Spleen (tissue), 13 donors: ENCODE measurements at regions of chr1 and their contacts with region 1.

Region 1: GRCh38 chr1:220776720-220777326 is 9.9 kb upstream of the MTARC1 start:
- DNase-seq: peak; percentile 95
- H3K4me3 ChIP-seq: no peak overlapping the region
- H3K27ac ChIP-seq: peak overlapping the region in 3 of 8 donors; percentile 73 to 83 (median 74)
- H3K4me1 ChIP-seq: peaks cover 0 to 28% (median 15%) of the 10 kb centered on the region in 6 donors
- H3K27me3 ChIP-seq: no peaks in the 10 kb centered on the region
- CTCF ChIP-seq: peak; percentile 55 to 94 (median 86)
- POLR2A ChIP-seq: no peak

Region 2: DNA sequence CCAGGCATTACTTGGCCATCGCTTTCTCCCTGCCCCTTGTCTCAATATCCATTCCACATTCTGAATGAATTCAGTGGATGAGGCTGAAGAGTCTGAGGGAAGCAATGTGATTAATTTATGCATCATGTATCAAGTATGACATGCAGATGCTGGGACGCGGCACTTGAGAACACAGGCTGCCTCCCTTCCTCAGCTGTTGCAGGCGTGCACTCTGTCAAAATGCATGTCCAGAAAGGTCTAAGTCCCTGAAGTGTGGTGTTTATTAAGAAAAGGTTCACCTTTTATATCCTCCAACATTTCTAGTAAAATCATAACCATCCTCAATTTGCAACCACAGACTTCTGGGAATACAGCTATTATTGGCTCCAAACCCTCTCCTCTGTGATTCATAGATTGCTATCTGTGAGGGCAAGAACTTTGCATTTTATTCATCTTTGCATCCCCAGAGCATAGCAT is 481.9 kb before region 1 on chr1:
- intact Hi-C with region 1: loop called (anchors 10 kb)
- DNase-seq: no peak
- H3K4me3 ChIP-seq: no peak overlapping the region
- H3K27ac ChIP-seq: no peak overlapping the region
- H3K4me1 ChIP-seq: no peaks in the 10 kb centered on the region
- H3K27me3 ChIP-seq: peaks cover 0 to 44% (median 0%) of the 10 kb centered on the region in 7 donors
- CTCF ChIP-seq: no peak
- POLR2A ChIP-seq: no peak

Region 3: GRCh38 chr1:220680085-220680687 is 96.6 kb before region 1 on chr1:
- intact Hi-C with region 1: loop called (anchors 5 kb)
- DNase-seq: no peak
- H3K4me3 ChIP-seq: no peak overlapping the region
- H3K27ac ChIP-seq: no peak overlapping the region
- H3K4me1 ChIP-seq: peaks cover 0 to 12% (median 3%) of the 10 kb centered on the region in 6 donors
- H3K27me3 ChIP-seq: no peaks in the 10 kb centered on the region
- CTCF ChIP-seq: peak in 10 of 11 experiments; percentile 9 to 70 (median 58)
- POLR2A ChIP-seq: no peak